ENCODE measurements at regions of chr15 and their contacts with region 1.

Region 1: DNA sequence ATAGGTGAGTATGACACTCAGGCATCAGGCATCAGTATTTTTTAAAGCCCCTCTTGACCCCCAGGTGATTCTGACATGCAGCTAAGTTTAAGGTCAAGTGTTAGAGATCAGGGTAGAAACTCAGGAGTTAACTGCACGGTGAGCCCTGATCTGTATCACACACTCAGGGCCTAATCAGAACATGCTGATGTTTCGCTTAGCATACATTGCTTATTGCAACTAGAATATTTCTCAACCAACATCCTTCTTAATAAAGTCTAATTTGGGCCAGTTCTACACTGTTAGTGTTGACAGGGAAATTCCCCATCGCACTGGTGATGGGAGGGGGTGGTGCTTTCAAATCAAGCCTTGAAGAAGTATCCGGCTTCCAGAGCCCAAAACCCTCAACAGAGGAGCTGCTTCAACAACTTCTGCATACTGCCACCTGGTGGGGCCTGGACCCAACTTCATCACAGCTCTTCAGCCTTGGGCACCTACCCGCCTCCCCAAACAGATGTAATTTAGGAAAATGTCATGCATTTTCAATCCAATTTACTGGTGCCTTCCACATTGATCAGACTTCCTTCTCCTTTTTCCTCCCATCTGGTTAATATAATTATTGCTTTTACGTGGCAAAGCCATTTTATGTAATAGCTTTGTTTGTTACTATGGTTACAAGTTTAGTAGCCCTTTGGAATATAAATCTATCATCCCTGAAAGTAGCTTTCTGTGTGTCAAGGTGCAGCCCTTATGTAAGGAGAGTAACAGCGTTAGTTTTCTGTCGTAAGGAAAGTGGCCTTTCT is 312.2 kb downstream of the RORA start:
- DNase-seq: peak; percentile 80
- H3K4me3 ChIP-seq: no peak overlapping the region
- H3K27ac ChIP-seq: no peak overlapping the region
- H3K4me1 ChIP-seq: no peaks in the 10 kb centered on the region
- H3K27me3 ChIP-seq: no peaks in the 10 kb centered on the region
- CTCF ChIP-seq: peak; percentile 72 to 87
- POLR2A ChIP-seq: no peak

Region 2: GRCh38 chr15:60520825-60521368 is 396.0 kb before region 1 on chr15:
- CTCF ChIA-PET with region 1: interaction called, 14 read pairs
- POLR2A ChIA-PET with region 1: no interaction called
- dilution Hi-C with region 1: no loop called
- intact Hi-C with region 1: loop called (anchors 5 kb)
- DNase-seq: peak; percentile 78
- H3K4me3 ChIP-seq: no peak overlapping the region
- H3K27ac ChIP-seq: no peak overlapping the region
- H3K4me1 ChIP-seq: peaks cover 18% of the 10 kb centered on the region
- H3K27me3 ChIP-seq: no peaks in the 10 kb centered on the region
- CTCF ChIP-seq: peak; percentile 75 to 76
- POLR2A ChIP-seq: no peak

Region 3: GRCh38 chr15:60592371-60593169 is 324.3 kb before region 1 on chr15:
- CTCF ChIA-PET with region 1: interaction called, 270 read pairs
- POLR2A ChIA-PET with region 1: no interaction called
- dilution Hi-C with region 1: no loop called
- intact Hi-C with region 1: loop called (anchors 1 kb)
- DNase-seq: peak; percentile 74
- H3K4me3 ChIP-seq: peak overlapping the region; percentile 33 to 83 (median 49)
- H3K27ac ChIP-seq: peak overlapping the region; percentile 2
- H3K4me1 ChIP-seq: peaks cover 14% of the 10 kb centered on the region
- H3K27me3 ChIP-seq: no peaks in the 10 kb centered on the region
- CTCF ChIP-seq: peak; percentile 23 to 49
- POLR2A ChIP-seq: no peak

Region 4: DNA sequence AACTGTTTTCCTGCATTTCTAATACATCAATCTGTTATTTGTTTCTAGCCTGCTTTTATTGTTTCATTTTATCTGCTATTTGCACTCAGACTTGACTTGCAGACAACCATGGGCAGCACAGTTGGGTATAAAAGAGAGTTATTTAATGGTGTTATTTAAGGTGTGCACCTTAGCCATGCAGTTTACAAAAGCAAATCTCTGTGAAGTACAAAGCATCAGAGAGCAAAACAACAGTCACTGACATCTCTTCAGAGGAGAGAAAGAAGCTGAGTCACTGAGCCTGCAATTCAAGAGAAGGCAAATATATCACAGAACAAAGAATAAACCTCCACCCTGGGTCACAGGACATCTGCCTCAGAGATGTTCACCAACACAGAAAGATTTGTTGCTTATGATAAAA is 182.0 kb before region 1 on chr15:
- CTCF ChIA-PET with region 1: no interaction called
- POLR2A ChIA-PET with region 1: no interaction called
- dilution Hi-C with region 1: no loop called
- intact Hi-C with region 1: no loop called
- DNase-seq: no peak
- H3K4me3 ChIP-seq: no peak overlapping the region
- H3K27ac ChIP-seq: no peak overlapping the region
- H3K4me1 ChIP-seq: no peaks in the 10 kb centered on the region
- H3K27me3 ChIP-seq: peaks cover 0 to 1% of the 10 kb centered on the region in 2 experiments
- CTCF ChIP-seq: no peak
- POLR2A ChIP-seq: no peak

Region 5: DNA sequence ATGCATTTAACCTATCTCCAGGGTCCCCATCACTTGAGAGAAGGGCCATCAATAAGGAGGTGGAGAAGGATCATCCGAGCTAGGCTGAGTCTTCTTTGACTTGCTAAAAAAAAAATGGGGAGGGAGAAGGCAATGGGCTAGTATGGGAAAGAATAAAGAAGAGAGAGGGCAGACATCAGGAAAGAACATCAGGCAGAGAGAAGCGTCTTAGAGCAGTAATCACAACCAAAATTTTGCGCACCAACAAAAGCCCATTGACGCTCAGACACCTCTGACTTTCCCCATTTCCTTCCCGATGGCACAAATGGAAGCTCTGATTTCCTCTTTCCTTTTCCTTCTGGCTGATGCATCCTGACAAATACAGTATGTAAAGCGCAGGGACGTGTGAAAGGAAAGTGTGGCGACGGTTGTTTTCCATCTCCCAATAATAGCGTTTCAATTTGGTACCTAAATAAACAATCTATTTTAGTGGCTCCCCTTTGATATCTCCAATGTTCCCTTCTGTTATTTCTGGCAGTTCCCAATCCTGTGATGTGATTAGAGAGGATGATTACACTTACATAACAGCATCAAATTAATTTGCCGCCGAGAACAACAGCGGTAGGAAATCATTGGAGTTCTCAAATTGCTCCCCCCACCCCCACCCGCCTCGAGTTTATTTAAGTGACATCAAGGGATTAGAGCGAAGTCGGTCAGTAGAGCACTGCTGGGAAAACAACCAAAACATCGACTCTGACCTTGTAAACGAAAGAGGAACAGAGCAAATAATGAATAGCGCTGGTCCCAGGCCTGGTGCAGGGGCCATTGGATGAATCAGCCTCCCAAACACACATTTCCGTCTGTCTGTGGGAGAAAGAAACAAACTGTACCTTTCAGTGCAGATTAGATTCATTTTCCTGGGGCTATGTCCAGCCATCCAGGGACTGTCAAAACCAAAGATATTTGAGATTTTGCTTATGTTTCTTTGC is 164.6 kb before region 1 on chr15:
- CTCF ChIA-PET with region 1: interaction called, 3 read pairs
- POLR2A ChIA-PET with region 1: no interaction called
- dilution Hi-C with region 1: no loop called
- intact Hi-C with region 1: loop called (anchors 1 kb)
- DNase-seq: peak; percentile 88
- H3K4me3 ChIP-seq: peak overlapping the region in 2 of 3 experiments; percentile 6 to 47
- H3K27ac ChIP-seq: peak overlapping the region; percentile 65
- H3K4me1 ChIP-seq: peaks cover 22% of the 10 kb centered on the region
- H3K27me3 ChIP-seq: no peaks in the 10 kb centered on the region
- CTCF ChIP-seq: no peak
- POLR2A ChIP-seq: no peak

Region 6: GRCh38 chr15:60932051-60932915 is 15.4 kb after region 1 on chr15:
- CTCF ChIA-PET with region 1: interaction called, 28 read pairs
- POLR2A ChIA-PET with region 1: no interaction called
- dilution Hi-C with region 1: no loop called
- intact Hi-C with region 1: no loop called
- DNase-seq: no peak
- H3K4me3 ChIP-seq: no peak overlapping the region
- H3K27ac ChIP-seq: no peak overlapping the region
- H3K4me1 ChIP-seq: no peaks in the 10 kb centered on the region
- H3K27me3 ChIP-seq: peaks cover 0 to 3% of the 10 kb centered on the region in 2 experiments
- CTCF ChIP-seq: no peak
- POLR2A ChIP-seq: no peak

Region 7: DNA sequence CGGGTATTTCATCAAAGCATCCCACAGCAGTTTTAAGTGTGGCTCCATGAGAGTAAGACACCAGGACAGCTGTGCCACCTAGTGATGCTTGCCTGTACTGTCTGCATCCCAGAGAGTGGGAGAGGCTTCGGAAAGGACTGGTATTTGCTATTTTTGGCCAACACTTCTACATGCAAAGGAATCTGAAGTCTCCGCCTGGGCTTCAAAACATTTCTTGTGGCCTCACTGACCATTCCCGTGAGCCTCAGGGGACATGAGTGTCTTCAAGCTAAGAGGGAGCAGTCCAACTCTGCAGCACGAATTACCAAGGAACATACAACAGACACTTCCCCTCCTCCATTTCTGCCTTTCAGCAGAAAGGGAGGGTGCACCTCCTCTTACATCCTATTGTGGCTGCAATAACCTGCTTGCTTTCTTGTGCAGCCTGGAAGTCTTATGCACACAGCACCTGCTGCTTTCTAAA is 134.7 kb after region 1 on chr15:
- CTCF ChIA-PET with region 1: interaction called, 18 read pairs
- POLR2A ChIA-PET with region 1: no interaction called
- dilution Hi-C with region 1: no loop called
- intact Hi-C with region 1: loop called (anchors 1 kb)
- DNase-seq: peak; percentile 70
- H3K4me3 ChIP-seq: no peak overlapping the region
- H3K27ac ChIP-seq: no peak overlapping the region
- H3K4me1 ChIP-seq: no peaks in the 10 kb centered on the region
- H3K27me3 ChIP-seq: no peaks in the 10 kb centered on the region
- CTCF ChIP-seq: peak; percentile 68 to 78
- POLR2A ChIP-seq: no peak

Region 8: GRCh38 chr15:61299075-61299763 is 382.3 kb after region 1 on chr15:
- CTCF ChIA-PET with region 1: no interaction called
- POLR2A ChIA-PET with region 1: no interaction called
- dilution Hi-C with region 1: no loop called
- intact Hi-C with region 1: no loop called
- DNase-seq: no peak
- H3K4me3 ChIP-seq: no peak overlapping the region
- H3K27ac ChIP-seq: no peak overlapping the region
- H3K4me1 ChIP-seq: no peaks in the 10 kb centered on the region
- H3K27me3 ChIP-seq: no peaks in the 10 kb centered on the region
- CTCF ChIP-seq: no peak
- POLR2A ChIP-seq: no peak